BJ (cell line): ENCODE measurements at regions of chr19 and their contacts with region 1.

Region 1: DNA sequence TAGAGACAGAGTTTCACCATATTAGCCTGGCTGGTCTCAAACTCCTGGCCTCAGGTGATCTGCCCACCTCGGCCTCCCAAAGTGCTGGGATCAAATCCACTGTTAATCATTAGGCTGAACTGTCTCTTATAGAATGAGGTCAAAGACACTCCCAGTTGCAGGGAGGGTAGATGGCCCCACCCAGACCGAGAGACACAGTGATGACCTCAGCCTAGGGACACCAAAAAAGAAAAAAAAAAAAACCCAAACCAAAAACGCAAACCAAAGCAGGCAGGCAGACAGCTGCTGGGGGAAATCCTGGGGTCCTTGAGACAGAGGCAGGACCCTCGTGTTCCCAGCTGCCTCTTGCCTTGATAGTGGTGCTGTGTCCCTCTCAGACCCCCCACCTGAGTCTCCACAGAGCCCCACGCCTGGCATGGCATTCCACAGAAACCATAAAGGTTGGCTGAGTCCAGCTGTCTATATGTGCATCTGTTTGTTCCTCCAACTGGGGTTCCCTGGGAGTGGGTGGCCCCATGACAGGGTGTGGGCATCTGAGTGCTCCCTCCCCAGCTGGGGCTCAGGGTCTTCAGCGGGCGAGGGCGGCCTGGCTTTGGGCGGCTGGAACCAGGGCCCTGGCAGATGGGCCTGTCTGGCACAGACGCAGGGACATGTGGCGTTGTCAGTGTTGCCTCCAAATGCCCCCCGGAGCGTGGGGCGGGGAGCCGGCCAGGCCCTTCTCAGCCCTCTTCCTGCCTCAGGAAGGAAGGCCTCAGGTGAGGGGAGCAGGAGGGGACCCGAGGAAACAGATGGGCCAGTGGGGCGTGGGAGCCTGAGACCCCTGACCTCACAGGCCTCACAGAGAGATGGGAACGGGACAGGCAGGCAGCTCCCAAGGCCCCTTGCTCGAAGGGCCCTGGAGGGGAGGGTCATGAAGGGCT is 5.2 kb downstream of the DAND5 start:
- DNase-seq: no peak
- H3K4me3 ChIP-seq: no peak overlapping the region
- H3K27me3 ChIP-seq: no peaks in the 10 kb centered on the region
- CTCF ChIP-seq: no peak

Region 2: GRCh38 chr19:12847159-12848139 is 127.1 kb before region 1 on chr19:
- CTCF ChIA-PET with region 1: no interaction called
- POLR2A ChIA-PET with region 1: no interaction called
- DNase-seq: peak; percentile 16
- H3K4me3 ChIP-seq: peak overlapping the region; percentile 9; the same call in 1 of the 2 replicates
- H3K27me3 ChIP-seq: peaks cover 2% of the 10 kb centered on the region; the same call in 1 of the 2 replicates
- CTCF ChIP-seq: peak; percentile 77

Region 3: DNA sequence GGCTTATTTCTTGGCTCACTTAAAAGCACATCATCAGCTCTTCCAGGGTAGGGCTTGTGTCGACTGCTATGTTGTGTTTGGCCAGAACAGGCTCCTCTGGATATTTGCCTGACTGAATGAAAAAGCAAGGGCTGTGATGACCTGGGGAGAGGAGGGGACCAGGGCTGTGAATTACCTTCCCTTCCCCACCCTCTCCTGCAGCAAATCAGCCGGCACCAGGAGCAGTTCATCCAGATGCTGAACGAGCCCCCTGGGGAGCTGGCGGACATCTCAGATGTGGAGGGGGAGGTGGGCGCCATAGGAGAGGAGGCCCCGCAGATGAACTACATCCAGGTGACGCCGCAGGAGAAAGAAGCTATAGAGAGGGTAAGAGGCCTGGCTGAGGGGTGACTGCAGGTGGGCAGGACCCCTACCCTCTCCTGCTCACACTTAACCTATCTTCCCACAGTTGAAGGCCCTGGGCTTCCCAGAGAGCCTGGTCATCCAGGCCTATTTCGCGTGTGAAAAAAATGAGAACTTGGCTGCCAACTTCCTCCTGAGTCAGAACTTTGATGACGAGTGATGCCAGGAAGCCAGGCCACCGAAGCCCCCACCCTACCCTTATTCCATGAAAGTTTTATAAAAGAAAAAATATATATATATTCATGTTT is 21.9 kb before region 1 on chr19:
- CTCF ChIA-PET with region 1: no interaction called
- POLR2A ChIA-PET with region 1: no interaction called
- DNase-seq: no peak
- H3K4me3 ChIP-seq: no peak overlapping the region
- H3K27me3 ChIP-seq: no peaks in the 10 kb centered on the region
- CTCF ChIP-seq: no peak

Region 4: GRCh38 chr19:13150187-13150930 is 175.8 kb after region 1 on chr19 and contains the starts of genes IER2 and STX10:
- CTCF ChIA-PET with region 1: interaction called, 4 read pairs
- POLR2A ChIA-PET with region 1: interaction called, 10 read pairs
- DNase-seq: peak; percentile 76
- H3K4me3 ChIP-seq: peak within 1 kb of the TSS; percentile 88
- H3K27me3 ChIP-seq: no peaks in the 10 kb centered on the region
- CTCF ChIP-seq: peak; percentile 76
- polyA plus RNA-seq, gene IER2: 9.1 and 18.2 TPM in 2 replicates
- polyA plus RNA-seq, gene STX10: 56.8 and 73.1 TPM in 2 replicates

Region 5: DNA sequence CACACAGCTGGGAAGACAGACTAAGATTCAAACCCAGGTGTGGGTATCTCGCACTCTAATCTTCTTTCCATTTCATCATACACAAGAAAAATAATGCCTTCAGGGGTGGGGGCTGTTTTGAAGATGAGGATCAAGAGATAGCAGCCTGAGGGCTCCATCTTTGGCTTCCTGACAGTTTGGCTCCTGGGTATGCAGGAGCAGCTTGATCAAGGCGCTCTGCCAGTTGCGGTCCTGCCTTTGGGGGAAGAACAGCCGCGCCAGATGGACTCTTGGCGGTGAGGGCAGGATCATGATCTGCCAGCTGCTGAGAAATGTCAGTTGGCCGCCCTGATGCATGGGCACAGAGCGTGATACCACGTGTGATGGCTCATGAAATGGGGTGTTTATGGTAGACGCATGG is 294.8 kb after region 1 on chr19:
- CTCF ChIA-PET with region 1: interaction called, 60 read pairs
- POLR2A ChIA-PET with region 1: no interaction called
- DNase-seq: no peak
- H3K4me3 ChIP-seq: no peak overlapping the region
- H3K27me3 ChIP-seq: no peaks in the 10 kb centered on the region
- CTCF ChIP-seq: no peak